ENCODE measurements at regions of chr14 and their contacts with region 1.

Region 1: DNA sequence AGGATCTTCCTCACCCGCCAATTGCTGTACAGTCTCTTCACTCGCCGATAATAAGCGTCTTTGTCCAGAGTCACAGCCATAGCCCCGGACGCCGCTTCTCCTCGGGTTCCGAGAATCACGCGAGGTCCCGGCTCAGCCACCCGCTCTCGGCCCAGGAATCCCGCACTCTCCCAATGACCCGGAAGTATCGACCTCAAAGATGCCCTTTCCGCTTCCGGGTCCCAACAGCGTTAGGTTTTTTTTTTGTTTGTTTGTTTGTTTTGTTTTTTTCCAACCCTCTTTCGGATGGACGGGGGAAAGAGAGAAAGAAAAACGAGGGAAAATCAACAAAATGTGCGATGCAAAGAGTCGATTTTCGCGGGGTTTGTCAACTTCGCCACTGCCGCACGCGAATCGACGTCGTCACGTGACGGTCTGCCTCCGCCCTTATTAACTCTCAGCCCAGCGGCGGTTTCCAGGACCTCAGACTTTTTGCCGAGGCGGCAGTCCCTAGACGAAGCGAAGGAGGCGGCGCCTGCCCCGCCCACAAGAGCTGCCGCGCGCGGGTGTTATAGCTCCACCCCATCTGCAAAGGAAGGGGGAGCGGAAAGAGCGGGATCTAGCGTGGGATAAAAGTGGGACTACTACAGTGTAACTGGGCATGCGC is at the start of gene SUPT16H:
- DNase-seq: peak; percentile 99
- H3K4me3 ChIP-seq: peak within 1 kb of the TSS; percentile 63 to 88 (median 84)
- H3K27ac ChIP-seq: peak within 1 kb of the TSS; percentile 86 to 91 (median 87)
- H3K4me1 ChIP-seq: peaks cover 20 to 44% (median 40%) of the 10 kb centered on the region in 4 donors
- H3K27me3 ChIP-seq: no peaks in the 10 kb centered on the region
- CTCF ChIP-seq: no peak
- EP300 ChIP-seq: no peak
- POLR2A ChIP-seq: no peak
- total RNA-seq, gene SUPT16H: 52.7 to 74.3 (median 60.5) TPM

Region 2: DNA sequence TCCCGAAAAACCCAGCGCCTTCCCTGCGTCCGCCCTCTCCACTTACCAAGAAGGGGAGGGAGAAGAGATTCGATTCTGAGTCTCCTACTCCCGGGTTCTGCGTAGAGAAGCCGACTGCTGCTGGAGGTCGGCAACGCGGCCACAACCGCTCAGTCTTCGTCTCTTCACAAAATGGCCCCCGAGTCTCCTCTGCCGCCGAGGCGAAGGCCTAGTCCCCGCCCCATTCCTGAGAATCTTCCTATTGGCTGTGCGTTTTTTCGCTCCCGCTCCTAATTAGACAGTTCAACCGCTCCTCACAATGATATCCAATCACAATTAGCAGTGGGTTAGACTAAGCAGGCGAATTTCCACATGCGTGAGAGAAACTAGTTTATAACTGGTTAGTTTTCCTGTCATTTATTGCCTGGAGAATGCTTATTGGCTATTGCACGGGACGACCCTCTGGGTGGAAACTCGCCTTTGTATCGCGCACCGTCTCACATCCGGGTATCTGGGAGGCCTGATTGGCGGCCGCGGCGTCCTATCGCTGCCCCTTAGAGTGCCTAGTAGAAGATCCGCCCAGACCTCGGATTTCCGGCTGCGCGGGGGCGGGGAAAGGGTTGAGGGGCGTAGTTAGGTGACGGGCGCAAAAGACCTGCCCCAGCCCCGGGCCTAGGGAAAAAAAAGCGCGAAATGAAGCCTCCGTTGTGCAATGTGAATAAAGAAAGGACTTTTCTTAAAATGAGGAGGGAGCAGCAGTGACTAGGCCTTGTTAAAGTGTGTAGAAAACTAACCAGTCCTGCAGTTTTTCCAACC is 114.5 kb before region 1 on chr14 and contains the start of gene HNRNPC:
- intact Hi-C with region 1: loop called (anchors 5 kb)
- DNase-seq: peak; percentile 100
- H3K4me3 ChIP-seq: peak within 1 kb of the TSS; percentile 87 to 93 (median 88)
- H3K27ac ChIP-seq: peak within 1 kb of the TSS; percentile 94 to 99 (median 96)
- H3K4me1 ChIP-seq: peaks cover 35 to 50% (median 47%) of the 10 kb centered on the region in 4 donors
- H3K27me3 ChIP-seq: no peaks in the 10 kb centered on the region
- CTCF ChIP-seq: peak in 1 of 3 experiments; percentile 41
- EP300 ChIP-seq: no peak
- POLR2A ChIP-seq: peak; percentile 99
- total RNA-seq, gene HNRNPC: 260 to 396 (median 292) TPM

Measured in esophagus muscularis mucosa (tissue), 4 donors.